Activated CD4-positive, alpha-beta memory T cell treated with anti-CD3 and anti-CD28 coated beads for 36 hours (primary cell): ENCODE measurements at regions of chr2 and their contacts with region 1.

Region 1: DNA sequence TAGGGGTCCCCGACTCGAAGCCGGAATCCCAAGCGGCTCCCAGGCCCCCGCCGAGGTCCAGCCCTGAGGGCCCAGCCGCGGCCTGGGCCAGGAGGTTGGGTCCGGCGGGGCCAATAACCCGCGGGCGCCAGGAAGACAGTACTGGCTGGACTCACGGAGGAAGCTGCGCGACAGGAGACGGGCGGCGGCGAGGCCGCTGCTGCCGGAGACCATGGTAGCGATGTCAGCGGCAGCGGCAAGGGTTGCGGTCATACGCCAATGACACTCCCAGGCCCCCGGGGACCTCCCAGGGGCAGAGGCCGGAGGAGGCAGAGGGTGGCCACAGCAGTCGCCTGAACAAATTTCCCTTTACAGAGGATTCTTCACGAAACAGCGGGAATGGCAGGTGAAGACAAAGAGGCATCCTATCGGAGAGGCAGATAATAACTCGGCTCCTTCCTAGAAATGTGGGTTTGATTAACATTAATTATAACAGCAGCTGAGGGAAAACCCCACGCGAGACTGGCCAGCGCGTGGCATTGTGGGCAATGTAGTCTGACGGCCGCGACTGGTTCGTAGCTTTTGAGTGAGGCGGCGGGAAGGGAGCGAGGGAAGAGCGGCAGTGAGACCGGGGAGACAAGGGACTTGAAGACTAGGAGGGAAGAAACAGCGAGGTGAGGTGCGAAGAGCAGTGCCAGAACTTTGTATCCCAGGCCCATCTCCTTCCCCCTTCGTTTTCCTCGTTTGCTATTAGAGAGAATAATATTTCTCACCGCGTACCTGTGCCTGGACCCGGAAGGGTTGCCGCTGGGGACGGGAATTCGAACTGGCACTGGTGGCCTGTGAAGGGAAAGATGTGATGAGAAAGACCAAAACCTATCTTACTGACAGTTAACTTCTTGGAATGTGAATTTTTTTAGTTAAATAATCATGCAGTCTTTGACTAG is at the start of gene SUCLG1:
- DNase-seq: peak; percentile 91
- H3K4me3 Mint-ChIP-seq: peak within 1 kb of the TSS; percentile 98
- H3K27ac Mint-ChIP-seq: peak within 1 kb of the TSS; percentile 90
- H3K4me1 Mint-ChIP-seq: peaks cover 40% of the 10 kb centered on the region
- H3K27me3 Mint-ChIP-seq: no peaks in the 10 kb centered on the region
- total RNA-seq, gene SUCLG1: 70.3 to 70.4 TPM

Region 2: DNA sequence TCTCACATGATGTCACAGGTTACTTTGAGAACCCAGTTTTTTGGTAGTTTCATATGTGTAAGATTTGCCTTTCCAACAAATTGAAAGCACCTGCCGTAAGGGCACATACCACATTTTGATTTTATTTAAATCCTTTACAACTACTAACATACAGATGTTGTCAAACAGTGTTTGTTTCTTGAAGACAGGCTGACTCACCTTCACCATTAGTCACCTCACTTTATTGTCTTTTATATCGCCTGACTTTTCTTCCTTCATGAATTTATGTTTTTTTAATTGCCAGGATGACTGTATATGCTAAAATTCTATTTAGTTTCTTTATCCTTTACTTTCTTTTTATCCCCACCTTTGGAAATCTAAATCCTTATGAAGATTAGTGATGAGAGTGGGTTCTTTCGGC is 886.9 kb before region 1 on chr2:
- CTCF ChIA-PET with region 1: no interaction called
- POLR2A ChIA-PET with region 1: no interaction called
- intact Hi-C with region 1: no loop called
- DNase-seq: no peak
- H3K4me3 Mint-ChIP-seq: no peak overlapping the region
- H3K27ac Mint-ChIP-seq: no peak overlapping the region
- H3K4me1 Mint-ChIP-seq: no peaks in the 10 kb centered on the region
- H3K27me3 Mint-ChIP-seq: no peaks in the 10 kb centered on the region

Region 3: DNA sequence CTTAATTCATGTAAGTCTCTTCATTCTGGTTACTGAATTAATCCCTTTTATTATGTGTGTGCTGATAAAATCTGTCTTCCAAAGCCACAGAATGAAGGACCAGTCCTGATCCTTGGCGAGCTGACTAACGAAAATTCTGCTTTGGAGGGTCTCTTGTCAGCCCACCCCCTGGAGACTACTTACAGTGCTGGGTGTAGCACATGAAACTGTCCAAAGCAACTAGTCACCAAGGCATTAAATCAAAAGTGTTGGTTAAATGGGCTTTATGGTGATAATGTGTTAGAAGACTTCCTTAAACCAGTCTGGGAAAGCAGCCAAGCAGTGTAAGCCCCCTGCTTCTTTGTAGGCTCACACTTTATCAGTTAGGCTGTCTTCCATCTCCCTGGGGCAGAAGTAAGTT is 420.4 kb before region 1 on chr2:
- CTCF ChIA-PET with region 1: no interaction called
- POLR2A ChIA-PET with region 1: no interaction called
- intact Hi-C with region 1: no loop called
- DNase-seq: no peak
- H3K4me3 Mint-ChIP-seq: no peak overlapping the region
- H3K27ac Mint-ChIP-seq: no peak overlapping the region
- H3K4me1 Mint-ChIP-seq: peaks cover 2% of the 10 kb centered on the region
- H3K27me3 Mint-ChIP-seq: peaks cover 8% of the 10 kb centered on the region

Region 4: DNA sequence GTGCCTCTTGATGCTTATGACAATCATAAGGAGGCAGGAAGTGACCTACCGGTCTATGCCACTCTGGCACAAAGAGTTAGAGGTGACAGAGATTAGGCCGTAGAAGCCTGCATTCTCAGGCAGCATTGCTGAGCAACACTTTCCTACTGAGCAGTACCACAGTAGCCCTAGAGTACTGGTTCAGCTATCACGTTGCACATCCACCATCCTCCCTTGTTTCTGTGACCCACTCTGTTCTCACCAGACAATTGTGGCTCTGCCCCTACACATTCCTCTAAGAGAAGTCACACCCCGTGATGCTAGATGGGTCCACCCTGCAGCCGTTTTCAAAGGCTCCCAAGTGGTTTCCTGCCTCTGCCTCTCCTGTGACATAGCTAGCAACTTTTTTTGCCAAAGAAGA is 22.4 kb after region 1 on chr2:
- CTCF ChIA-PET with region 1: interaction called, 3 read pairs
- POLR2A ChIA-PET with region 1: no interaction called
- intact Hi-C with region 1: loop called (anchors 1 kb)
- DNase-seq: peak; percentile 41
- H3K4me3 Mint-ChIP-seq: no peak overlapping the region
- H3K27ac Mint-ChIP-seq: peak overlapping the region; percentile 38
- H3K4me1 Mint-ChIP-seq: peaks cover 17% of the 10 kb centered on the region
- H3K27me3 Mint-ChIP-seq: no peaks in the 10 kb centered on the region

Region 5: DNA sequence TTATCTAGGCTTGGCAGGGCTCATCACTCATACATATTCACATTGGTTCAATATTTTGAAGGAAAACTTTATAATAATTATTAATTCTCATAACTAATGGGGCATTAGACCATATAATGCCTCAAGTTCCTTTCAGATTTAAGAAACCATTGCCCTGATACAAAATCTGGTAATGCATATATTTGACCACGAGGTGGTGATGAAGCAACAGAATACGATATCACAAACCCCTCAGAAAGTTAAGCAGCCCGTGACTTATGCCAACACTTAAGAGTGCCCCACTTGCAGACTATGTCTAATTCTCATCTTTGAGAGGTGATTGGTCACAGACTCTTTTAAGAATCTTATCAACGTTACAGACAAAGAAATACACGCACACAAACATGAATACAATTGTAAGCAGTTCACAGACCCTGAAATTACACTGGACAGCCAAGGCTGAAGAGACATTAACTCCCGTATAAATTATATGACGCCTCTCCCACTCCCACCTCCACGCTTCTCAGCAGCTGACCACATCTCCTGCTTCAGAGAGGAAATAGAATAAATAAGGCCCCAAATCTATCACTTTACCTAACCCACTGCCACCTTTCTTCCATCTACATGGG is 36.4 kb after region 1 on chr2:
- CTCF ChIA-PET with region 1: no interaction called
- POLR2A ChIA-PET with region 1: no interaction called
- intact Hi-C with region 1: no loop called
- DNase-seq: no peak
- H3K4me3 Mint-ChIP-seq: no peak overlapping the region
- H3K27ac Mint-ChIP-seq: no peak overlapping the region
- H3K4me1 Mint-ChIP-seq: peaks cover 17% of the 10 kb centered on the region
- H3K27me3 Mint-ChIP-seq: no peaks in the 10 kb centered on the region

Region 6: GRCh38 chr2:84516234-84516986 is 57.1 kb after region 1 on chr2 and contains the start of gene DNAH6:
- CTCF ChIA-PET with region 1: no interaction called
- POLR2A ChIA-PET with region 1: no interaction called
- intact Hi-C with region 1: loop called (anchors 2 kb)
- DNase-seq: peak; percentile 92
- H3K4me3 Mint-ChIP-seq: peak within 1 kb of the TSS; percentile 84
- H3K27ac Mint-ChIP-seq: no peak within 1 kb of the TSS
- H3K4me1 Mint-ChIP-seq: peaks cover 23% of the 10 kb centered on the region
- H3K27me3 Mint-ChIP-seq: no peaks in the 10 kb centered on the region
- total RNA-seq, gene DNAH6: 0.33 to 0.85 TPM